MCF 10A (cell line): ENCODE measurements at regions of chr6 and their contacts with region 1.

Region 1: DNA sequence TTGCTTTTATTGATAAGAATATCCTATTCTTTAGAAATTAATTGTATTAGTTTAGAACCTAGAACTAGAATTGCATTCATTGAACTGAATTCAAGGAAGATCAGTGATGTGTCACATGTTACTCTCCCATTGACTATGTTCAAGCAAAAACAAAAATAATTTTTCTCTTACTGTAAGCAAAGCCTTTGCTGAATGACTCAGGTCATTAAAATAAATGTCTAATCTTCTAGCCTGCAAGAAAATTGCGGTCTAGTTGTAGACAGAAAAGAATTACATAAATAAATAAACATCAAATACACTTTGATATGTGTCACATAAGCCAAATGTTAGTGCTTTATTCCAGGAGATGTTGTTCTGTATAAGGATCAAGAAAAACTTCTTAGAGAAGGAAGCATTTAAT is 387.9 kb downstream of the ADGRB3 start:
- DNase-seq: peak; percentile 6
- H3K4me3 Mint-ChIP-seq: no peak overlapping the region
- H3K27ac Mint-ChIP-seq: no peak overlapping the region
- H3K4me1 Mint-ChIP-seq: no peaks in the 10 kb centered on the region
- H3K27me3 Mint-ChIP-seq: peaks cover 66% of the 10 kb centered on the region
- CTCF ChIP-seq: no peak

Region 2: GRCh38 chr6:68740828-68741500 is 282.0 kb before region 1 on chr6:
- CTCF ChIA-PET with region 1: no interaction called
- POLR2A ChIA-PET with region 1: no interaction called
- intact Hi-C with region 1: loop called (anchors 5 kb)
- DNase-seq: no peak
- H3K4me3 Mint-ChIP-seq: no peak overlapping the region
- H3K27ac Mint-ChIP-seq: no peak overlapping the region
- H3K4me1 Mint-ChIP-seq: no peaks in the 10 kb centered on the region
- H3K27me3 Mint-ChIP-seq: peaks cover under 1% of the 10 kb centered on the region
- CTCF ChIP-seq: no peak

Region 3: GRCh38 chr6:70107852-70108629 is 1085.0 kb after region 1 on chr6:
- CTCF ChIA-PET with region 1: no interaction called
- POLR2A ChIA-PET with region 1: no interaction called
- intact Hi-C with region 1: no loop called
- DNase-seq: peak; percentile 33
- H3K4me3 Mint-ChIP-seq: no peak overlapping the region
- H3K27ac Mint-ChIP-seq: no peak overlapping the region
- H3K4me1 Mint-ChIP-seq: no peaks in the 10 kb centered on the region
- H3K27me3 Mint-ChIP-seq: peaks cover 96% of the 10 kb centered on the region
- CTCF ChIP-seq: peak; percentile 64